CD8-positive, alpha-beta memory T cell (primary cell): ENCODE measurements at regions of chr17 and their contacts with region 1.

Region 1: GRCh38 chr17:1197781-1198490 is 18.2 kb upstream of the ABR start:
- DNase-seq: peak; percentile 44 to 84 (median 76)
- H3K4me3 ChIP-seq: no peak overlapping the region
- H3K4me3 Mint-ChIP-seq: peak overlapping the region; percentile 26 to 82 (median 67)
- H3K27ac ChIP-seq: peak overlapping the region; percentile 32
- H3K27ac Mint-ChIP-seq: peak overlapping the region; percentile 78 to 99 (median 86)
- H3K4me1 ChIP-seq: peaks cover 60% of the 10 kb centered on the region
- H3K4me1 Mint-ChIP-seq: peaks cover 57 to 68% (median 65%) of the 10 kb centered on the region in 3 donors
- H3K27me3 ChIP-seq: no peaks in the 10 kb centered on the region
- H3K27me3 Mint-ChIP-seq: no peaks in the 10 kb centered on the region

Region 2: GRCh38 chr17:1005361-1005946 is 192.5 kb before region 1 on chr17:
- CTCF ChIA-PET with region 1: no interaction called
- POLR2A ChIA-PET with region 1: no interaction called
- DNase-seq: peak in 1 of 5 donors; percentile 26
- H3K4me3 ChIP-seq: no peak overlapping the region
- H3K4me3 Mint-ChIP-seq: no peak overlapping the region
- H3K27ac ChIP-seq: no peak overlapping the region
- H3K27ac Mint-ChIP-seq: peak overlapping the region in 4 of 8 donors; percentile 26 to 81 (median 54)
- H3K4me1 ChIP-seq: no peaks in the 10 kb centered on the region
- H3K4me1 Mint-ChIP-seq: peaks cover 0 to 3% (median 2%) of the 10 kb centered on the region in 3 donors
- H3K27me3 ChIP-seq: no peaks in the 10 kb centered on the region
- H3K27me3 Mint-ChIP-seq: no peaks in the 10 kb centered on the region

Region 3: DNA sequence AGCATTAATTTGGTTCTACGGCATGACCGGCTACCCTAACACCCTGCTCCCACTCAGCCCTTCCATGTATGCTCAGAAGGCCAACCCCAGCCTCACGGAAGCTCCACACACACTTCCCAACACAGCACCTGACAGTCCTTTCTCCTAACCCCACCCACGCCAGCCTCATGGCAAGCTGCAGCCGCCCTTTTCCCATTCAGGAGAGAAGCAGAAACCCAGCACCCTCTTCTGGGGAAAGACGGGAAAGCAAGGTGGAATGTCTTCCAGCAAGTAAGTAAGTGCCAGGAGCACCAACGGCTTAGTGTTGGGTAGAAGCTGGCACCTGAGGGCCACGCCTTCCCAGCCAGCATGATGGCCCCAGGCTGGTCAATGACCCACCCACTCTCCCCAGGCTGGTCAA is 50.3 kb before region 1 on chr17:
- CTCF ChIA-PET with region 1: no interaction called
- POLR2A ChIA-PET with region 1: no interaction called
- DNase-seq: no peak
- H3K4me3 ChIP-seq: no peak overlapping the region
- H3K4me3 Mint-ChIP-seq: no peak overlapping the region
- H3K27ac ChIP-seq: no peak overlapping the region
- H3K27ac Mint-ChIP-seq: peak overlapping the region in 2 of 8 donors; percentile 52 to 62
- H3K4me1 ChIP-seq: no peaks in the 10 kb centered on the region
- H3K4me1 Mint-ChIP-seq: peaks cover 0 to 3% (median 0%) of the 10 kb centered on the region in 3 donors
- H3K27me3 ChIP-seq: no peaks in the 10 kb centered on the region
- H3K27me3 Mint-ChIP-seq: no peaks in the 10 kb centered on the region

Region 4: GRCh38 chr17:1179818-1180742 is 17.9 kb before region 1 on chr17 and contains the start of gene ABR:
- CTCF ChIA-PET with region 1: interaction called, 6 read pairs
- POLR2A ChIA-PET with region 1: interaction called, 10 read pairs
- DNase-seq: peak; percentile 59 to 82 (median 61)
- H3K4me3 ChIP-seq: no peak within 1 kb of the TSS
- H3K4me3 Mint-ChIP-seq: peak within 1 kb of the TSS; percentile 71 to 90 (median 75)
- H3K27ac ChIP-seq: no peak within 1 kb of the TSS
- H3K27ac Mint-ChIP-seq: peak within 1 kb of the TSS in 4 of 8 donors; percentile 3 to 60 (median 38)
- H3K4me1 ChIP-seq: peaks cover 4% of the 10 kb centered on the region
- H3K4me1 Mint-ChIP-seq: peaks cover 0 to 44% (median 6%) of the 10 kb centered on the region in 3 donors
- H3K27me3 ChIP-seq: no peaks in the 10 kb centered on the region
- H3K27me3 Mint-ChIP-seq: no peaks in the 10 kb centered on the region
- total RNA-seq, gene ABR: 60.4 to 60.8 TPM

Region 5: DNA sequence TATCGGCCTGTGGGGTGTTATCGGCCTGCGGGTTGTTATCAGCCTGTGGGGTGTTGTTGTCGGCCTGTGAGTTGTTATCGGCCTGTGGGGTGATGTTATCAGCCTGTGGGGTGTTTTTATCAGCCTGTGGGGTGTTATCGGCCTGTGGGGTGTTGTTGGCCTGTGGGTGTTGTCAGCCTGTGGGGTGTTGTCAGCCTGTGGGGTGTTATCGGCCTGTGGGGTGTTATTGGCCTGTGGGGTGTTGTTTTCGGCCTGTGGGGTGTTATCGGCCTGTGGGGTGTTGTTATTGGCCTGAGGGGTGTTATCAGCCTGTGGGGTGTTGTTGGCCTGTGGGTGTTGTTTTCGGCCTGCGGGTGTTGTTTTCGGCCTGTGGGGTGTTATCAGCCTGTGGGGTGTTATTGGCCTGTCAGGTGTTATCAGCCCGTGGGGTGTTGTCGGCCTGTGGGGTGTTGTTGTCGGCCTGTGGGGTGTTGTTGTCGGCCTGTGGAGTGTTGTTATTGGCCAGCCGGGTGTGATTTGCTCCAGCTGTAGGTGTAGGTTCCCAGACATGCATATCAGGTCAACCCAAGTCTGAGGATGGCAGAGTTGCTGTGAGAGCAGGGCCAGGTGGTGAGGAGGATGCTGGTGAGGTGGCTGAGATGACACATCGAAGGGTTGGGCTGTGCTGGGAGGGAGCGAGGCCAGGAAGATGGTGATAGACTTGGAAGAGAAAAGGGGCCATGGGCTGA is 88.6 kb after region 1 on chr17:
- CTCF ChIA-PET with region 1: no interaction called
- POLR2A ChIA-PET with region 1: no interaction called
- DNase-seq: no peak
- H3K4me3 ChIP-seq: no peak overlapping the region
- H3K4me3 Mint-ChIP-seq: peak overlapping the region in 2 of 7 donors; percentile 13 to 17
- H3K27ac ChIP-seq: no peak overlapping the region
- H3K27ac Mint-ChIP-seq: peak overlapping the region in 3 of 8 donors; percentile 7 to 61 (median 54)
- H3K4me1 ChIP-seq: no peaks in the 10 kb centered on the region
- H3K4me1 Mint-ChIP-seq: peaks cover 5 to 26% (median 13%) of the 10 kb centered on the region in 3 donors
- H3K27me3 ChIP-seq: no peaks in the 10 kb centered on the region
- H3K27me3 Mint-ChIP-seq: peaks cover 0 to 1% of the 10 kb centered on the region in 2 donors